ENCODE measurements at regions of chr18 and their contacts with region 1.

Region 1: DNA sequence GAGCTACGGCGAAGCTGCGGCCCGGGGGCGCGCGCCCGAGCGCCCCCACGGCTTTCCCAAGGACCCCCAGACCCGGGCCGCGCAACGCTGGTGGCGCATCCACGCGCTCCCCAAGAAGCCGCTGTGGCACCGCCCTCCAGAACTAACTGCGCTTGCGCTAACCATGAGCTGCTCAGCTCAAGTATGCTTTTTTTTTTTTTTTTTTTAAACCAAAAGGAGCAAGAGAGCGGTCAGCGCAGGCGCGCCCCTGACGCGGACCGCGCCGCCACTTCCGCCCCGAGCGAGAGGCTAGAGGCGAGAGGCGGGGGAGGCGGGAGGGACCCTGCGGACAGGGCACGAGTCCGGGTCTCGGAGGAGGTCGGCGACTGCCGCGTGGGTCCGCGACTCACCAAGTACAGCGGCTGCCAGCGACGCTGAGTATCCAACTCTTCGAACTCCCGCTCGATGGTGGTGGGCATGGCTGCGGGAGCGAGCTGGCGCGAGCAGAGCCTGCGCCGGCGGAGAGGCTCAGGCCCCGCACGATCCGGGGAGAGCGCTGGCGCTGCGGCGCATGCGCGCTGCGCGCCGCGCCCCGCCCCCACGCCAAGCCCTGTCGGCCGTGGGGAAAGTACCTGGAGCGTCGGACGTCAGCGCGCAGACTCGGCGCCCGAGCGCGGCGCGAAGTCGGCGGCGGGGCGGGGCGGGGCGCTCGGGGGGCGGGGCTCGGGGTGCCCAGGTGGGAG is at the start of gene PTPN2:
- DNase-seq: peak; percentile 93 to 95
- H3K4me3 ChIP-seq: peak within 1 kb of the TSS; percentile 97
- H3K4me3 Mint-ChIP-seq: peak within 1 kb of the TSS; percentile 73
- H3K27ac Mint-ChIP-seq: peak within 1 kb of the TSS; percentile 82
- H3K4me1 ChIP-seq: peaks cover 18% of the 10 kb centered on the region
- H3K4me1 Mint-ChIP-seq: peaks cover 28% of the 10 kb centered on the region
- H3K27me3 ChIP-seq: no peaks in the 10 kb centered on the region
- H3K27me3 Mint-ChIP-seq: no peaks in the 10 kb centered on the region
- CTCF ChIP-seq: no peak
- total RNA-seq, gene PTPN2: 53.4 and 55.0 TPM in 2 replicates

Region 2: DNA sequence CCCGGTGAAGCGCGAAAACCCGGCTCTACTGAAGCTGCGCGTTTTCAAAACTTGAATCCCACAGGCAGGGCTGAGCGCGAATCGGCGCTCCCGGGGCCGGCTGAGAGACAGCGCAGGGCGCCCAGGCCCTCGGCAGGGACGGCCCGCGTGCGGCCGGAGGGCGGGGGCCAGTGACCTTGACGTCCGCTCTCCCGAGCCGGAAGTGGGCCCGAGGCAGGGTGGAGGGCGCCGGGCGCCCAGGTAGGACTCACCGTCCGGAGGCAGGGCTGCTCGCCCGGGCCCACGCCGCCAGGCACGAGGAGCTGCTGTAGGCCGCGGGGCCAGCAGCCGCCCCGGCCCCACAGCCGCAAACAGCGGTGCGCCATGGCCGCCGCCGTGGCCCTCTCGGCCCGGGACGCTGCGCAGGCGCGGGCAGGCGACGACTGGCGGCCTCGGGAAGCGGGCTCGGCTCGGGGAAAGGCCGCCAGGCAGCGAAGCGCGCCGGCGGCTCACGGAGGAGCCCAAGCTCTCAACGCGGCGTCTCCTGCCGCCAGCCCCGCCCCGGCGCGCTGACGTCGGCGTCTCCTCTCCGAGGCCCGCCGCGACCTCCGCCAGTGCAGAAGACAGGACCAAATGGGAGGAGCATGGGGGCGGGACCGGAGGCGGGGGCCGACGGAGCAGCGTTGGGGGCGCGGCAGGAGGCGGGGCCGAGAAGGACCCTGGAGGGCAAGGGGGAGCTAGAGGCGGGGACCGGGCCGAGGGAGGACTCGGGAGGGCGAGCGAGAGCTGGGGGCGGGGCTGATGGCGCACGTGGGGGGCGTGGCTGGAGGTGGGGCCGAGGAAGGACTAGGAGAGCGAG is 506.9 kb before region 1 on chr18 and contains the start of gene AFG3L2:
- CTCF ChIA-PET with region 1: interaction called, 3 read pairs
- POLR2A ChIA-PET with region 1: interaction called, 22 read pairs
- intact Hi-C with region 1: no loop called
- DNase-seq: peak; percentile 100
- H3K4me3 ChIP-seq: peak within 1 kb of the TSS; percentile 92
- H3K4me3 Mint-ChIP-seq: peak within 1 kb of the TSS; percentile 80
- H3K27ac Mint-ChIP-seq: peak within 1 kb of the TSS; percentile 92
- H3K4me1 ChIP-seq: peaks cover 8% of the 10 kb centered on the region; the same call in 1 of the 2 replicates
- H3K4me1 Mint-ChIP-seq: no peaks in the 10 kb centered on the region
- H3K27me3 ChIP-seq: no peaks in the 10 kb centered on the region
- H3K27me3 Mint-ChIP-seq: no peaks in the 10 kb centered on the region
- CTCF ChIP-seq: no peak
- total RNA-seq, gene AFG3L2: 69.8 and 72.0 TPM in 2 replicates

Region 3: GRCh38 chr18:12744103-12744502 is 139.7 kb before region 1 on chr18:
- CTCF ChIA-PET with region 1: interaction called, 4 read pairs
- POLR2A ChIA-PET with region 1: interaction called, 12 read pairs
- intact Hi-C with region 1: no loop called
- DNase-seq: peak in 1 of 2 experiments; percentile 38
- H3K4me3 ChIP-seq: no peak overlapping the region
- H3K4me3 Mint-ChIP-seq: no peak overlapping the region
- H3K27ac Mint-ChIP-seq: no peak overlapping the region
- H3K4me1 ChIP-seq: peaks cover 8% of the 10 kb centered on the region; the same call in 1 of the 2 replicates
- H3K4me1 Mint-ChIP-seq: no peaks in the 10 kb centered on the region
- H3K27me3 ChIP-seq: no peaks in the 10 kb centered on the region
- H3K27me3 Mint-ChIP-seq: no peaks in the 10 kb centered on the region
- CTCF ChIP-seq: peak; percentile 31 to 49

Region 4: DNA sequence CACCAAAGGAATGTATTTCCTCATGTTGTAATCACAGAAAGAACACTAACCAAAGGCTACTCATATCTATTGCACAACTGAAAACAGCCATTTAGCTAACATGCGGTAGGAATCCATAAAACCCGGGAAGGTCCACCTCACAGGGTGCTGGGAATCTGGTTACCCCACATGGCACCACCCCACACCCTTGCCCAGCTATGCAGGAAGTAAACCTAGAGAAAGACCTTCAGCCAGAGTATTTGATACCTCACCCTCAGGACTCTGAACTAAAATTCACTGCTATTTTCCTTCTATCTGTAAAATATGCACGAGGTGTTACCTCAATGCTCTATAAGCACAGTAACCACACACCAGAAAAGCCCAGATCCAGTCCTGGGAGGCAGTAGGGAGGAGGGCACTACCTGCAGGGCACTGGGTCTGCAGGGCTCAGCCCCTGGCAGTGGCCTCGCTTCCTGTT is 45.6 kb before region 1 on chr18:
- CTCF ChIA-PET with region 1: no interaction called
- POLR2A ChIA-PET with region 1: interaction called, 19 read pairs
- intact Hi-C with region 1: no loop called
- DNase-seq: peak; percentile 73 to 78
- H3K4me3 ChIP-seq: no peak overlapping the region; the same call in 1 of the 2 replicates
- H3K4me3 Mint-ChIP-seq: peak overlapping the region; percentile 47
- H3K27ac Mint-ChIP-seq: peak overlapping the region; percentile 72
- H3K4me1 ChIP-seq: peaks cover 16% of the 10 kb centered on the region
- H3K4me1 Mint-ChIP-seq: peaks cover 6% of the 10 kb centered on the region
- H3K27me3 ChIP-seq: no peaks in the 10 kb centered on the region
- H3K27me3 Mint-ChIP-seq: no peaks in the 10 kb centered on the region
- CTCF ChIP-seq: no peak

Region 5: GRCh38 chr18:12868576-12868975 is 15.3 kb before region 1 on chr18:
- CTCF ChIA-PET with region 1: interaction called, 4 read pairs
- POLR2A ChIA-PET with region 1: interaction called, 70 read pairs
- intact Hi-C with region 1: no loop called
- DNase-seq: no peak
- H3K4me3 ChIP-seq: no peak overlapping the region
- H3K4me3 Mint-ChIP-seq: no peak overlapping the region
- H3K27ac Mint-ChIP-seq: no peak overlapping the region
- H3K4me1 ChIP-seq: no peaks in the 10 kb centered on the region
- H3K4me1 Mint-ChIP-seq: no peaks in the 10 kb centered on the region
- H3K27me3 ChIP-seq: no peaks in the 10 kb centered on the region
- H3K27me3 Mint-ChIP-seq: no peaks in the 10 kb centered on the region
- CTCF ChIP-seq: no peak

Region 6: GRCh38 chr18:12934454-12935071 is 50.7 kb after region 1 on chr18:
- CTCF ChIA-PET with region 1: interaction called, 22 read pairs
- POLR2A ChIA-PET with region 1: interaction called, 15 read pairs
- intact Hi-C with region 1: no loop called
- DNase-seq: peak; percentile 86
- H3K4me3 ChIP-seq: no peak overlapping the region
- H3K4me3 Mint-ChIP-seq: peak overlapping the region; percentile 2
- H3K27ac Mint-ChIP-seq: peak overlapping the region; percentile 16
- H3K4me1 ChIP-seq: peaks cover 29% of the 10 kb centered on the region; the same call in 1 of the 2 replicates
- H3K4me1 Mint-ChIP-seq: peaks cover 20% of the 10 kb centered on the region
- H3K27me3 ChIP-seq: no peaks in the 10 kb centered on the region
- H3K27me3 Mint-ChIP-seq: no peaks in the 10 kb centered on the region
- CTCF ChIP-seq: peak; percentile 85 to 96

Region 7: GRCh38 chr18:12990967-12991838 is 107.4 kb after region 1 on chr18 and contains the start of gene CEP192:
- CTCF ChIA-PET with region 1: no interaction called
- POLR2A ChIA-PET with region 1: interaction called, 32 read pairs
- intact Hi-C with region 1: no loop called
- DNase-seq: peak; percentile 98 to 99
- H3K4me3 ChIP-seq: peak within 1 kb of the TSS; percentile 78
- H3K4me3 Mint-ChIP-seq: peak within 1 kb of the TSS; percentile 72
- H3K27ac Mint-ChIP-seq: peak within 1 kb of the TSS; percentile 70
- H3K4me1 ChIP-seq: peaks cover 8% of the 10 kb centered on the region; the same call in 1 of the 2 replicates
- H3K4me1 Mint-ChIP-seq: peaks cover 20% of the 10 kb centered on the region
- H3K27me3 ChIP-seq: no peaks in the 10 kb centered on the region
- H3K27me3 Mint-ChIP-seq: no peaks in the 10 kb centered on the region
- CTCF ChIP-seq: peak in 1 of 2 experiments; percentile 27
- total RNA-seq, gene CEP192: 33.5 and 38.1 TPM in 2 replicates

Region 8: DNA sequence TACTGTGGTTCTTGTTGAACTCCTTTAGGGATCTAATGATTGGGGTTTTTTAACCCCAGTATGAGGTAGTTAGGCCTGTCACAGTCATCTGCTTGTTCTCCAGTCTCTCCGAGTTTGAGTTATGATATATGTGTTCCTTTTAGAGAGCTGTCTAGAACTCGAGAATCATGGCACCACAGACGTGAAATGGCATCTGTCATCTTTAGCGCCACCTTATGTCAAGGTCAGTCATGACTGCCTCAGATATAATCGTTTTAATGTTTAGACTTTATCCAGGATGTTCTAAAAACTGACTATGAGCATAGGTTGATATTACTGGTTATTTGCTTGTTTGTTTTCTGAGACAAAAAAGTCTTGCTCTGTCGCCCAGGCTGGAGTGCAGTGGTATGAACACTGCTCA is 219.5 kb after region 1 on chr18:
- CTCF ChIA-PET with region 1: no interaction called
- POLR2A ChIA-PET with region 1: no interaction called
- intact Hi-C with region 1: no loop called
- DNase-seq: no peak
- H3K4me3 ChIP-seq: no peak overlapping the region
- H3K4me3 Mint-ChIP-seq: no peak overlapping the region
- H3K27ac Mint-ChIP-seq: no peak overlapping the region
- H3K4me1 ChIP-seq: no peaks in the 10 kb centered on the region
- H3K4me1 Mint-ChIP-seq: no peaks in the 10 kb centered on the region
- H3K27me3 ChIP-seq: no peaks in the 10 kb centered on the region
- H3K27me3 Mint-ChIP-seq: no peaks in the 10 kb centered on the region
- CTCF ChIP-seq: no peak

Region 9: GRCh38 chr18:13166023-13166422 is 282.2 kb after region 1 on chr18:
- CTCF ChIA-PET with region 1: no interaction called
- POLR2A ChIA-PET with region 1: no interaction called
- intact Hi-C with region 1: no loop called
- DNase-seq: no peak
- H3K4me3 ChIP-seq: no peak overlapping the region
- H3K4me3 Mint-ChIP-seq: no peak overlapping the region
- H3K27ac Mint-ChIP-seq: no peak overlapping the region
- H3K4me1 ChIP-seq: no peaks in the 10 kb centered on the region
- H3K4me1 Mint-ChIP-seq: no peaks in the 10 kb centered on the region
- H3K27me3 ChIP-seq: no peaks in the 10 kb centered on the region
- H3K27me3 Mint-ChIP-seq: peaks cover 6% of the 10 kb centered on the region
- CTCF ChIP-seq: no peak